PC-3 (cell line): ENCODE measurements at regions of chr17 and their contacts with region 1.

Region 1: DNA sequence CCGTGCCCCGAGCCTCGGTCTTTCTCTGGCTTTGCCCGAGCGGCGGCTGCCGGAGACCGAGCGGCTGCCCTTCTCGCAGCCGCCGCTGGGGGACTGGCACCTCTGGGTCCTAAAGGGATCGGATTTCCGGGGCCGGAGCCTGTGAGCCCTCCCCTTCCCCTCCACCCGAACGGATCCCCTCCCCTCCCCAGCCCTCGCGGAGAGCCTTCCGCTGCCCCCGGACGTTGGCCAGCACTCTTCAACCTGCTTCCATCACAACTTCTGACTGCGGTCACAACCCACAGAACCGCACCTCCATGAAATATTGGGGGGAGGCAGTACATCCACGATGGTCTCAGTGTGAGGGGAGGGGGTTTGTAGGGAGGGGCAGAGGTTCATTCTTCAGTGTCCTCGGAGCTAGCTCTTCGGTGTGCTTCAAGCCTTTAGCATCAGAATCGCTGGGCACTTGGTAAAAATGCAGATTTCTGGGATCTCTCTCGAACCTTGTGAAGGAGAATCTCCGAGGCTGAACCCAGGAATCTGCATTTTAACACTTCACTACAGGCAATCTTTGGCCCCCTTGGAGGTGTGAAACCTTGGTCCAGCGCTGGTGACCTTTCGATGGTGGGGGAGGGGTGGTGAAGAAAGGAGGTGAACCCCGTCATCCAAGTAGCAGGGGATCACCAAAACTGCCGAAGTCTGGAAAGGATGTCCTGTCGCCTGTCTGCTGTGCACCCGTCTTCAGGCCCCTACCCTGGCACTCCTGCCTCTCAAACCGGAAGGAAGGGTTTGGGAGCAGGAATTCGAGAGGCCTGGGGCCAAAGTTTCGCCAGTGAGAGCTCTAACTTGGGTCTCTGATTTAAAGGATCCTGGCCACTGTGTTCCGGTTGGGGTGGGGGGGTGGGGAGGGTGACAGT is 812 bp upstream of the PPP1R9B start:
- DNase-seq: peak; percentile 97
- ATAC-seq: peak; percentile 57
- H3K4me3 ChIP-seq: peak overlapping the region; percentile 90
- H3K27ac ChIP-seq: peak overlapping the region; percentile 82
- H3K4me1 ChIP-seq: peaks cover 51% of the 10 kb centered on the region
- H3K27me3 ChIP-seq: no peaks in the 10 kb centered on the region
- CTCF ChIP-seq: peak; percentile 28; the same call in 1 of the 2 replicates

Region 2: GRCh38 chr17:50129728-50130558 is 21.3 kb before region 1 on chr17 and contains the start of gene SAMD14:
- CTCF ChIA-PET with region 1: no interaction called
- POLR2A ChIA-PET with region 1: interaction called, 18 read pairs
- intact Hi-C with region 1: no loop called
- DNase-seq: no peak
- ATAC-seq: peak; percentile 51
- H3K4me3 ChIP-seq: peak within 1 kb of the TSS; percentile 71
- H3K27ac ChIP-seq: no peak within 1 kb of the TSS
- H3K4me1 ChIP-seq: peaks cover 3% of the 10 kb centered on the region; the same call in 1 of the 2 replicates
- H3K27me3 ChIP-seq: peaks cover 17% of the 10 kb centered on the region
- CTCF ChIP-seq: no peak
- total RNA-seq, gene SAMD14: 0.11 and 0.17 TPM in 2 replicates

Region 3: GRCh38 chr17:51351890-51352289 is 1200.6 kb after region 1 on chr17:
- CTCF ChIA-PET with region 1: no interaction called
- POLR2A ChIA-PET with region 1: no interaction called
- intact Hi-C with region 1: no loop called
- DNase-seq: no peak
- ATAC-seq: no peak
- H3K4me3 ChIP-seq: no peak overlapping the region
- H3K27ac ChIP-seq: no peak overlapping the region
- H3K4me1 ChIP-seq: no peaks in the 10 kb centered on the region
- H3K27me3 ChIP-seq: peaks cover 94% of the 10 kb centered on the region
- CTCF ChIP-seq: no peak